Activated naive CD4-positive, alpha-beta T cell treated with anti-CD3 and anti-CD28 coated beads for 36 hours (primary cell): ENCODE measurements at regions of chr11 and their contacts with region 1.

Region 1: GRCh38 chr11:75388386-75389275 is 10.7 kb upstream of the RPS3 start:
- DNase-seq: peak; percentile 88
- H3K4me3 Mint-ChIP-seq: no peak overlapping the region
- H3K27ac Mint-ChIP-seq: no peak overlapping the region
- H3K4me1 Mint-ChIP-seq: peaks cover 11% of the 10 kb centered on the region
- H3K27me3 Mint-ChIP-seq: no peaks in the 10 kb centered on the region

Region 2: DNA sequence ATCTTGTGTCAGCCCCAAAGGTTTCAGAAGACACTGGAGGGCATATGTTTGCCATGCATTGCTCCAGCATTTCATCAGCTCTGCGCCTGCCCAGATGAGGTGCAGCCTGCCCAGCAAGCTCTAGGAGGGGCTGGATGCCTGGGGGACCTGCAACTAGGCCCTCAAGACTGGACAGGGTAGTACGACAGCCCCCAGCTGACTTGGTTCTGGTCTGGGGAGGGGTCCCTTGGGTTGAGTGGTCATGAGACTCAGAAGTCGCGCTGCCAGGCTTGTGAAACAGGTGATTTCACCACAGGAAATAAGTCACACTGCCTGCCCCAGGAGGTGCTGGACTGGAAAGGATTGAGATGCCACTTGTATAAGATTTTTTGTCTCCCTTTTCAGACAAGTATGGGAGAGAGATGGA is 124.7 kb before region 1 on chr11:
- CTCF ChIA-PET with region 1: interaction called, 11 read pairs
- intact Hi-C with region 1: no loop called
- DNase-seq: peak; percentile 62
- H3K4me3 Mint-ChIP-seq: no peak overlapping the region
- H3K27ac Mint-ChIP-seq: peak overlapping the region; percentile 4
- H3K4me1 Mint-ChIP-seq: peaks cover 46% of the 10 kb centered on the region
- H3K27me3 Mint-ChIP-seq: no peaks in the 10 kb centered on the region

Region 3: DNA sequence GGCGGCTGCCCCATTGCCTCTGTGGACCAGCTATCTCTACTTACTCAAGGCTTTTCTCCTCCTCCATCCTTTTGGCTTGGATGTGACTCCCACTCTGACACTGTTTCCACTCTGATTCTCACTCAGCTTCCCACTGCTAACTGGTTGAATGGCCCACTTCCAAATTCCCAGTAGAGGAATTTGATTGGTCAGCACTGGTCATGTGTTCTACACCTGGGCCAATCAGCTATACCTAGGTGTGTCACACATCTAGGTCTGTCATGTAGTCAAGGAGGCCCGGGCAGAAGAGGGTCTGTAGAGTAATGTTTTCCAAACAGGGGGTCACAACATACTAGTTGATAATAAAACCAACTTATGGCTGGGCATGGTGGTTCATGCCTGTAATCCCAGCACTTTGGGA is 94.7 kb before region 1 on chr11:
- CTCF ChIA-PET with region 1: interaction called, 10 read pairs
- intact Hi-C with region 1: no loop called
- DNase-seq: no peak
- H3K4me3 Mint-ChIP-seq: no peak overlapping the region
- H3K27ac Mint-ChIP-seq: no peak overlapping the region
- H3K4me1 Mint-ChIP-seq: peaks cover 25% of the 10 kb centered on the region
- H3K27me3 Mint-ChIP-seq: no peaks in the 10 kb centered on the region

Region 4: GRCh38 chr11:75342903-75343870 is 45.4 kb before region 1 on chr11:
- CTCF ChIA-PET with region 1: interaction called, 79 read pairs
- intact Hi-C with region 1: no loop called
- DNase-seq: no peak
- H3K4me3 Mint-ChIP-seq: no peak overlapping the region
- H3K27ac Mint-ChIP-seq: peak overlapping the region; percentile 46
- H3K4me1 Mint-ChIP-seq: peaks cover 96% of the 10 kb centered on the region
- H3K27me3 Mint-ChIP-seq: no peaks in the 10 kb centered on the region

Region 5: GRCh38 chr11:75365711-75366181 is 22.9 kb before region 1 on chr11:
- CTCF ChIA-PET with region 1: interaction called, 10 read pairs
- intact Hi-C with region 1: no loop called
- DNase-seq: no peak
- H3K4me3 Mint-ChIP-seq: no peak overlapping the region
- H3K27ac Mint-ChIP-seq: no peak overlapping the region
- H3K4me1 Mint-ChIP-seq: peaks cover 9% of the 10 kb centered on the region
- H3K27me3 Mint-ChIP-seq: no peaks in the 10 kb centered on the region

Region 6: DNA sequence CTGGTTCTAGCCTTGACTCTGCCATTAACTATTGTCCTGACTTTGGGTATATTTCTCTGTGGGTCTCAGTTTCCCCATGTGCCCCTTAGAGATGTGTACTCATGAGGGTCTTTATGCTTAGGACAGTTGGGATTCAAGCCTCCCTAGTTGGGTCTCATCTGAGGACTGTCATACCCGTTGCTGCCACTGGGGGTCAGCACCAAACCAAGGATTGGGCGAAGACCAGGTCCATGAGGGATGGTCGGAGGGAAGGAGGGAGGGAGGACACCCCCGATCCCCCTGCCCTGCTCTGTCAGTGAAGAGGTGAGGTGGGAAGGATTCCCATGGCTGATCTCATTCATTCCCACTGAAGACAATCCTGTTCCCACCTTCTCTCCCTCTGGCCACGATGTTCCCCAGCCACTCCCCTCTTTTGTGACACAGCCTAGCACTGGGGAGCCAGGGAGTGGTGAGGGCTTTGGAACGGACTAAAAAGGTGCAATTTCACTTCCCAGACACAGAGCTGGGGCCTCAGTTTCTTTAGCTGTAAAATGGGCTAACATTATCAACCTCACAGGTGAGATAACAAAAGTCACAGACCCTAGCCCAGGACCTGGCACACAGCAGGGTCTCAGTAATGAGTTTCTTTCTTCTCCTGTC is 56.8 kb after region 1 on chr11:
- CTCF ChIA-PET with region 1: interaction called, 22 read pairs
- intact Hi-C with region 1: no loop called
- DNase-seq: peak; percentile 82
- H3K4me3 Mint-ChIP-seq: no peak overlapping the region
- H3K27ac Mint-ChIP-seq: no peak overlapping the region
- H3K4me1 Mint-ChIP-seq: no peaks in the 10 kb centered on the region
- H3K27me3 Mint-ChIP-seq: no peaks in the 10 kb centered on the region